CD4-positive, alpha-beta T cell (primary cell): ENCODE measurements at regions of chr12 and their contacts with region 1.

Region 1: DNA sequence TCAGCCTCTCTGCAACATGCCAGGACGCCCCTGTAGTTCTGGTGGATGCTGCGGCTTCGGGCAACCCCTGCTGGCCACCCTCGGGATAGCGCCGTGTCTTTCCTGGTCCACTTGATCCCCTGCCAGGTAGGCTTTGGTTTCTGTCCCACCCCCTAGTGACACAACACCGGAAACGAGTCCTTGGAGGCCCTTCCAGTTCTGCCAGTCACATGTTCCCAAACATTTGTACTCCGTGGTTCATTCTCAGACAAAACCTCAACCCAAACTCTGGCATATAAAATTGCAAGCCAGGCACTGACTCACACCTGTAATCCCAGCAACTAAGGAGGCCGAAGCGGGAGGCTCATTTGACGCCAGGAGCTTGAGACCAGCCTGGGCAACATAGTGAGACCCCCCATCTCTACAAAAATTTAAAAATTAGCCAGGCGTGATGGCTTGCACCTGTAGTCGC is 37.1 kb downstream of the RASAL1 start:
- DNase-seq: peak; percentile 46 to 82 (median 62)
- ATAC-seq: peak; percentile 94
- H3K4me3 ChIP-seq: no peak overlapping the region
- H3K4me3 Mint-ChIP-seq: no peak overlapping the region
- H3K27ac ChIP-seq: no peak overlapping the region
- H3K27ac Mint-ChIP-seq: peak overlapping the region; percentile 45
- H3K4me1 ChIP-seq: peaks cover 38% of the 10 kb centered on the region
- H3K4me1 Mint-ChIP-seq: peaks cover 39% of the 10 kb centered on the region
- H3K27me3 ChIP-seq: no peaks in the 10 kb centered on the region
- H3K27me3 Mint-ChIP-seq: no peaks in the 10 kb centered on the region
- CTCF ChIP-seq: peak; percentile 87

Region 2: GRCh38 chr12:112900299-112901145 is 197.9 kb before region 1 on chr12:
- CTCF ChIA-PET with region 1: no interaction called
- POLR2A ChIA-PET with region 1: no interaction called
- intact Hi-C with region 1: loop called in 1 of 2 experiments (anchors 5 kb)
- DNase-seq: peak in 9 of 14 experiments; percentile 9 to 72 (median 42)
- ATAC-seq: peak; percentile 56
- H3K4me3 ChIP-seq: no peak overlapping the region
- H3K4me3 Mint-ChIP-seq: peak overlapping the region; percentile 22
- H3K27ac ChIP-seq: no peak overlapping the region
- H3K27ac Mint-ChIP-seq: peak overlapping the region; percentile 71
- H3K4me1 ChIP-seq: peaks cover 16% of the 10 kb centered on the region
- H3K4me1 Mint-ChIP-seq: peaks cover 44% of the 10 kb centered on the region
- H3K27me3 ChIP-seq: peaks cover 0 to 2% of the 10 kb centered on the region in 2 experiments
- H3K27me3 Mint-ChIP-seq: peaks cover 6% of the 10 kb centered on the region
- CTCF ChIP-seq: peak; percentile 90

Region 3: DNA sequence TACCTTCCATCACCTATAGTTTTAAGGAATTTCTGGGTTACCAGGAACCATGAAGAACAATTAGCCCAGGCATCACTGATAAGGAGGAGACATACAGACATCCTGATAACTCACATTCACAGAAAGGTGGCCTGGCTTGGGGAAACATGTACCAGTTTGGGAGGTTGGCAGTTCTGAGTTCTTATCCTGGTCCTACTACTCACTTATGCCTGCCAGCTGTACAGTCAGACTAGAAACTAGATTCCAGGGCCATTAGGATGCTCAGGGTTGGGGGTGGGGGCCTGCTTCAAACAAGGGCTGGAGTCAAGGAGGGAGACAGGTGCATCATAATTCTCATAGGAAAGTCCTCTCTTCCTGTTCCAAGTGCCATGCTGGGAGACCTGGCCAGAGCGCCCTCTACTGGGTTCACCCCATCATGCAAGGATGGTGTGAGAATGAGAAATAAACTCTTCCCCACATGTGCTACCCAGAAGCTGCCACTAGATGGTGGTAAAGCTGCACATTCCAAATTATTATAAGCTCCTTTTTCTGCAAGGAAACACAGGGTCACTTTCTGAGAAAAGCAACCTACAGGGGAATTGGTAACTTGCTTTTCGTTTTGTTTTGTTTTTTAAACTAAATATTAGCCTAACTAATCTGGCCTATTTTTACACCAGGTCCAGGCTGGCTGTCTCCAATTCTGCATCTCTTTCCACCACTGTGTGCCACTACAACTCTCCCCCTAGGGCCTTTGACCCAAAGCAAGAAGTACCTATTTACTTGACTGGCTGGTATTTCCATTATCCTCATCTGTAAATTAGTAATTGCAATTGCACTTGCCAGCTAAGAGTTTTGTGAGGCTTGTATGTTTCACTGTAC is 105.7 kb before region 1 on chr12:
- CTCF ChIA-PET with region 1: interaction called, 3 read pairs
- POLR2A ChIA-PET with region 1: no interaction called
- intact Hi-C with region 1: loop called (anchors 5 kb)
- DNase-seq: peak; percentile 16 to 76 (median 56)
- ATAC-seq: peak; percentile 87
- H3K4me3 ChIP-seq: no peak overlapping the region
- H3K4me3 Mint-ChIP-seq: no peak overlapping the region
- H3K27ac ChIP-seq: no peak overlapping the region
- H3K27ac Mint-ChIP-seq: peak overlapping the region; percentile 7
- H3K4me1 ChIP-seq: peaks cover 6% of the 10 kb centered on the region
- H3K4me1 Mint-ChIP-seq: peaks cover 25% of the 10 kb centered on the region
- H3K27me3 ChIP-seq: no peaks in the 10 kb centered on the region
- H3K27me3 Mint-ChIP-seq: no peaks in the 10 kb centered on the region
- CTCF ChIP-seq: peak; percentile 74

Region 4: GRCh38 chr12:113048716-113049127 is 49.7 kb before region 1 on chr12:
- CTCF ChIA-PET with region 1: interaction called, 5 read pairs
- POLR2A ChIA-PET with region 1: no interaction called
- intact Hi-C with region 1: loop called (anchors 1 kb)
- DNase-seq: peak; percentile 33 to 84 (median 52)
- ATAC-seq: peak; percentile 85
- H3K4me3 ChIP-seq: no peak overlapping the region
- H3K4me3 Mint-ChIP-seq: peak overlapping the region; percentile 51
- H3K27ac ChIP-seq: no peak overlapping the region
- H3K27ac Mint-ChIP-seq: no peak overlapping the region
- H3K4me1 ChIP-seq: peaks cover 14% of the 10 kb centered on the region
- H3K4me1 Mint-ChIP-seq: peaks cover 51% of the 10 kb centered on the region
- H3K27me3 ChIP-seq: no peaks in the 10 kb centered on the region
- H3K27me3 Mint-ChIP-seq: no peaks in the 10 kb centered on the region
- CTCF ChIP-seq: peak; percentile 75

Region 5: DNA sequence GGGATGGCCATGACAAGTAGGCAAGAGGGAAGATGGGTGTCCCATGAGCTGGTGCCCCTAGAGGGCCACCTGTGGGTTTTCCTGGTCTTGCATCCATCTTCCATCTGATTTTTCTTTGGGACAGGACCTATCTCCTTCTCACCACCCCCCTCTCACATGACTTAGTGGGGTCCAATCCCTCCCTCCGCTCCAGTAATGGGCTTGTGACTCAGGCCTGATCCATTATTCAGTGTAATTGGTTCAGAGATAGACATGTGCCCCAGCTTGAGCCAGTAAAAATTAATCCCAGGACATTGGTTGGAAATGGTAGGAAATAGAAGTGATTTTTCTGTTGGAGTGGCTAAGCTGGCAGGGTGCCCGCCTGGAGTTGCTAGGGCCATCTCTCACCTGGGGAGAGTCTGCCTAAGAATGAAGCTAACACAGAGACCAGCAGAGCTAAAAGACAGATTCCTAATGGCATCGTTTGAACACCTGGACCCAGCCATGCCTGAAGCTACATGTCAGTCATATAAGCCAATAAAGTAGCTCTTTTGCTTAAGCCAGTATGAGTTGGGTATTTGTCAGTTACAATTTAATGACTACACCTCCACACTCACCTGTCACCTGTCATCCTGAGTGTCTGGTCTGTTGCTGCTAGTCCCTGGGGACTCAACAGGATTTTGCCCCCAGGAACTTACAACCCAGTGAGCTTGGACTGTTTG is 22.3 kb after region 1 on chr12:
- CTCF ChIA-PET with region 1: no interaction called
- POLR2A ChIA-PET with region 1: no interaction called
- intact Hi-C with region 1: no loop called
- DNase-seq: no peak
- ATAC-seq: no peak
- H3K4me3 ChIP-seq: no peak overlapping the region
- H3K4me3 Mint-ChIP-seq: no peak overlapping the region
- H3K27ac ChIP-seq: no peak overlapping the region
- H3K27ac Mint-ChIP-seq: no peak overlapping the region
- H3K4me1 ChIP-seq: no peaks in the 10 kb centered on the region
- H3K4me1 Mint-ChIP-seq: no peaks in the 10 kb centered on the region
- H3K27me3 ChIP-seq: no peaks in the 10 kb centered on the region
- H3K27me3 Mint-ChIP-seq: no peaks in the 10 kb centered on the region
- CTCF ChIP-seq: no peak